Dendritic cell treated with granulocyte-macrophage colony-stimulating factor and Interleukin-4, amounts not matched to agents 40 ng/mL and 50 ng/mL, for 4 days (primary cell): ENCODE measurements at regions of chr17 and their contacts with region 1.

Region 1: DNA sequence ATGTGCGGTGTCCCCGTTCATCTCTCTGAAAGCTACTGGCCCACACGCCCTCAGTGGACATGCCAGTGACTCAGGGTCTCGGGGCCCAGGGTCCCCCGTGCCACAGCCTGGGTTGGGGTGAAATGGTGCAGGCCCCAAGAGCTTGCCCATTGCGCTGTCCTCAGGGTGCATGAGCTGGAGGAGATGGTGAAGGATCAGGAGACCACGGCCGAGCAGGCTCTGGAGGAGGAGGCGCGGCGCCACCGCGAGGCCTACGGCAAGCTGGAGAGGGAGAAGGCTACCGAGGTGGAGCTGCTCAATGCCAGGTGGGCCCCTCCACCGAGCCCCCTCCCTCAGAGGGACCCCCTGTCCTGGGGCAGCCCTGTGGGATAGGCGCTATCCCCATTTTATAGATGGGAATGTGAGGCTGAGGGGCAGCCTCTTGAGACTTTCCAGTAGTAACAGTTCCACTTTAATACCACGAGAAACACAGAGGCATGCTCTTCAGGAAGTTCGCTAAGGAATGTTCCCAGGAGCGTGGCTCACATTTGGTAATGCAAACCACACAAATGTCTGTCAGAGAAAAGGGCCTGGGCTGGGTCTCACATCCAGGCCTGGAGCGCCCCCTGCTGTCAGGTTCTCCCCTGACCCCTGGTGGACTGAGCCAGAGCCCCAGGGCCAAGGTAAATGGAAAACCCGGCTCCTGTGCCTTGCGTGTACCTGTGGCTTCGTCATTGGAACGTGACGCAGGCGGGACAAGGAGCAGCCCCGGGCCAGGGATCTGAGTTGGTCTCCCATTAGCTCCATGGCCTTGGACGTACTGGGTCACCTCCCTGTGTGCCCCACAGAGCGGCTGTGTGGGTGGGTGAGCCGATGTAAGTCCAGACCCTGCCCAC is 133.7 kb downstream of the RAB11FIP4 start:
- H3K4me3 Mint-ChIP-seq: no peak overlapping the region
- H3K27ac Mint-ChIP-seq: no peak overlapping the region
- H3K4me1 Mint-ChIP-seq: no peaks in the 10 kb centered on the region
- H3K27me3 Mint-ChIP-seq: no peaks in the 10 kb centered on the region

Region 2: GRCh38 chr17:31388770-31389661 is 136.1 kb before region 1 on chr17:
- intact Hi-C with region 1: loop called (anchors 1 kb)
- H3K4me3 Mint-ChIP-seq: no peak overlapping the region
- H3K27ac Mint-ChIP-seq: no peak overlapping the region
- H3K4me1 Mint-ChIP-seq: peaks cover 17% of the 10 kb centered on the region
- H3K27me3 Mint-ChIP-seq: peaks cover 61% of the 10 kb centered on the region

Region 3: GRCh38 chr17:31437720-31438420 is 87.3 kb before region 1 on chr17:
- intact Hi-C with region 1: loop called (anchors 1 kb)
- H3K4me3 Mint-ChIP-seq: no peak overlapping the region
- H3K27ac Mint-ChIP-seq: no peak overlapping the region
- H3K4me1 Mint-ChIP-seq: peaks cover 14% of the 10 kb centered on the region
- H3K27me3 Mint-ChIP-seq: peaks cover 30% of the 10 kb centered on the region

Region 4: GRCh38 chr17:31467502-31468256 is 57.5 kb before region 1 on chr17:
- intact Hi-C with region 1: no loop called
- H3K4me3 Mint-ChIP-seq: no peak overlapping the region
- H3K27ac Mint-ChIP-seq: no peak overlapping the region
- H3K4me1 Mint-ChIP-seq: peaks cover 26% of the 10 kb centered on the region
- H3K27me3 Mint-ChIP-seq: peaks cover 24% of the 10 kb centered on the region

Region 5: DNA sequence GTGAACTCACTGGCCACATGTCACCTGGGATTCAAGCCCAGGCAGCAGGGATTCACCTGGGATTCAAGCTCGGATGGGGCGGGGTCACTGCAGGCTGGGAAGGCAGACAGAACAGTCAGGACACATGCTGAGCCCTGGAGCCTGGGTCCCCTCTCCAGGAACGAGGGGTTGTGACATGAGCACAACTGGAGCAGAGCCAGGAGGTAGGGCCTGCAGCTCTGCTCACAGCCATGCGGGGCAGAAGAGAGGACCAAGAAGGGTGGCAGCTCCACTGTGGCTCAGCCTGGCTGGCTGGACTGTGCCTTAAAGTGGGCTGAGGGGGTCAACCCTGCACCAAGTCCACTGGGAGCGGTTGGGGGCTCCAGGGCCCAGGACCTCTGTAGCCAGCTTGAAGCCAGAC is 16.4 kb after region 1 on chr17:
- intact Hi-C with region 1: no loop called
- H3K4me3 Mint-ChIP-seq: no peak overlapping the region
- H3K27ac Mint-ChIP-seq: no peak overlapping the region
- H3K4me1 Mint-ChIP-seq: peaks cover 6% of the 10 kb centered on the region
- H3K27me3 Mint-ChIP-seq: peaks cover 4% of the 10 kb centered on the region